Right ventricle myocardium inferior (tissue), 1 donor: ENCODE measurements at regions of chrX and their contacts with region 1.

Region 1: DNA sequence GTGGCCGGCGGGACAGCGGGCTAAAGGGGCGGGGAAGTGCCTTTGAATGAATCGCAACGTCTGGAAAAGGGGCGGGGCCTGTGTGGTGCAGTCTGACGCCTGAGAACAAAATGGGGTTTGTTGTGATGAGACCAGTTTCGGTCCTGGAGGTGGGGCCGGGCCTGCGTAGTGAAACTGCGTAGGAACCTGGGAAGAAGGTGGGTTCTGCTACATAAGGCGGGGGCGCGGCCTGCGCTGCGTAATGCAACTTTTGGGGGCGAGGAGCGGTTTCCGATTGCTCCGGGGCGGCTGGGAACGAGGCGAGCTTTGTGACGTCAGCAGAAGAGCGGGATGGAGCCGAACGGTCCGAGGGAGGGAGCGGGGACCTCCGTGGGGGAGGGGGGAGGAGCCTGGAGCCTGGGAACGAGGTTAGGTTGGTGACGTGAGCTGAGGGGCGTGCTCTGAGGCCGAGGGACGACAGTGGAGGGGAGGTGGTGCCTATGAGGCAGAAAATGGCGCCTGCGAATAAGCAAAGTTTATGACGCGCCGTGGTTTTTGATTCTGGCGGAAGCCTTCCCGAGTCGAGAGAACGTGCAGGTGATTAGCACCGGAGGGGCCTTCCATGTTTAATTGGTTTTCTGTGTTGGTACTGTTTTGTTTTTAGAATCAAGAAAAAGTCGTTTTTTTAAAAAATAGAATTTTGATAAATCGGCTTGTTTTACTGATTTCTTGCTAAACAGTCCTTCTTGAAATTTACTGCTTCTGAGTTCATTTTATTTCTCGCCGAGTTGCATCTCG is 716 bp downstream of the USP11 start:
- DNase-seq: peak; percentile 95
- ATAC-seq: peak; percentile 96

Region 2: DNA sequence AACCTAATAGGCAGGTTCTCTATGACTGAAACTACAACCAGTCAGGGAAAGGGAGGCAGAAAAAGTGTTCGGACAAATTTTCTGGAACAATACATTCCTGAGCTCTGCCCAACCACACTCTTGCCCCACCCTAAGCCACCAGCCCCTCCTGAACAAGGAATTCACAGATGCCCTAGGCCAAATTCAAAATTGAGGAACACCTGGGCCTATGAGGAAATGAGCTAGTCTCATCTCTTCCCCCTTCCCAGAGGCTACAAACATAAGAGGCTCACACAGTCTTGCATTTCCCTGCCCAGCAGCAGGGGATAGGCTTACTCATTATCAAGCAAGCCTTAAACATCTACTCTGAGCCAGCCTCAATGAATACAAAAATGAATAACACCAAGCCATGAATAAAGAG is 973.0 kb before region 1 on chrX:
- intact Hi-C with region 1: no loop called
- DNase-seq: no peak
- ATAC-seq: no peak

Region 3: GRCh38 chrX:47193475-47194193 is 39.9 kb before region 1 on chrX and contains the start of gene UBA1:
- intact Hi-C with region 1: no loop called
- DNase-seq: peak; percentile 95
- ATAC-seq: peak; percentile 90
- total RNA-seq, gene UBA1: 93.5 TPM

Region 4: GRCh38 chrX:47217642-47218279 is 15.8 kb before region 1 on chrX:
- intact Hi-C with region 1: loop called (anchors 2 kb)
- DNase-seq: peak; percentile 97
- ATAC-seq: peak; percentile 92

Region 5: GRCh38 chrX:47361538-47362511 is 128.3 kb after region 1 on chrX:
- intact Hi-C with region 1: loop called (anchors 5 kb)
- DNase-seq: peak; percentile 74
- ATAC-seq: peak; percentile 96